Tibial artery (tissue), 4 donors: ENCODE measurements at regions of chr7 and their contacts with region 1.

Region 1: DNA sequence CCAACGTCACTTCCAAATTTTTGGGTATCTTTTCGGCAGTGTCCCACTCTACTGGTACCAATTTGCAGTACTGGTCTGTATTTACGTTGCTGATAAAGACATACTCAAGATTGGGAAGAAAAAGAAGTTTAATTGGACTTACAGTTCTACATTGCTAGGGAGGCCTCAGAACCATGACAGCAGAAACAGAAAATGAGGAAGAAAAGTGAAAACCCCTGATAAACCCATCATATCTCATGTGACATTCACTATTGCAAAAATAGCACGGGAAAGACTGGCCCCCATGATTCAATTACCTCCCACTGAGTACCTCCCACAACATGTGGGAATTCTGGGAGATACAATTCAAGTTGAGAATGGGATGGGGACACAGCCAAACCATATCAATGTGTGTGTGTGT is 364.0 kb upstream of the KCND2 start:
- DNase-seq: no peak
- H3K4me3 ChIP-seq: no peak overlapping the region
- H3K27ac ChIP-seq: no peak overlapping the region
- H3K4me1 ChIP-seq: no peaks in the 10 kb centered on the region
- H3K27me3 ChIP-seq: no peaks in the 10 kb centered on the region
- CTCF ChIP-seq: no peak

Region 2: DNA sequence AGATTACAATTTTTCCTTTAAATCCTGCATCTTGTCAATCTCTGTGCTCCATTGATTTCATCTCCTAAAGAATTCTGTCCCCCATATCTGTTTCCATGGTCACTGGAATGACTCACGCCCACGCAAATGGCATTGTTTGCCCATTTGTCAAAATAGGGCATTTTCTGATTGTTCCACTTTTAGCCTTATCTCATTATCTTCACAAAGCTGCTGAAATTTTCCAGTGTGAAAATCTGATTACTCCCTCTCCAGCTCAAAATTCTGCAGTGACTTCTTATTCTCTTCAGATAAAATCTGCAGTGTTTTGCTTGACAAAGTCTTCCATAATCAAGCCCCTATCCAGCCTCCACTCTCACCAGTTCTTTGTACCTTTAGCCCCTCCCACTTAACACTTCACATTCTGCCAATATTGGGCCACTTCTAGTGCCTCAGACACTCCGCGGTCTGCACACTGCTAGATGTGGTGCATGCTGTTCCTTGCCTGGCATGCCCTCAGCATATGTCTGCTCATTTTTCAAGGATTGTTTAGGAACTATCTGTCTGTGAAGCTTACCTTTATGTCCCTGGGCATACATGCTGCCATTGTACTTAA is 2001.8 kb before region 1 on chr7:
- intact Hi-C with region 1: loop called (anchors 5 kb)
- DNase-seq: no peak
- H3K4me3 ChIP-seq: no peak overlapping the region
- H3K27ac ChIP-seq: no peak overlapping the region
- H3K4me1 ChIP-seq: no peaks in the 10 kb centered on the region
- H3K27me3 ChIP-seq: no peaks in the 10 kb centered on the region
- CTCF ChIP-seq: no peak